ENCODE measurements at regions of chr20 and their contacts with region 1.

Region 1: GRCh38 chr20:32018269-32019074 is 8.2 kb downstream of the CCM2L start:
- DNase-seq: peak; percentile 98
- H3K4me3 ChIP-seq: peak overlapping the region; percentile 79
- H3K4me3 Mint-ChIP-seq: peak overlapping the region; percentile 93
- H3K27ac Mint-ChIP-seq: peak overlapping the region; percentile 85
- H3K4me1 ChIP-seq: peaks cover 12% of the 10 kb centered on the region
- H3K4me1 Mint-ChIP-seq: peaks cover 13% of the 10 kb centered on the region
- H3K27me3 ChIP-seq: peaks cover 13% of the 10 kb centered on the region
- H3K27me3 Mint-ChIP-seq: peaks cover 46% of the 10 kb centered on the region
- CTCF ChIP-seq: peak in 1 of 2 experiments; percentile 14

Region 2: GRCh38 chr20:31822421-31823330 is 195.8 kb before region 1 on chr20:
- CTCF ChIA-PET with region 1: interaction called, 15 read pairs
- POLR2A ChIA-PET with region 1: no interaction called
- intact Hi-C with region 1: loop called (anchors 2 kb)
- DNase-seq: peak; percentile 80 to 92
- H3K4me3 ChIP-seq: no peak overlapping the region
- H3K4me3 Mint-ChIP-seq: no peak overlapping the region
- H3K27ac Mint-ChIP-seq: no peak overlapping the region
- H3K4me1 ChIP-seq: no peaks in the 10 kb centered on the region
- H3K4me1 Mint-ChIP-seq: no peaks in the 10 kb centered on the region
- H3K27me3 ChIP-seq: no peaks in the 10 kb centered on the region
- H3K27me3 Mint-ChIP-seq: no peaks in the 10 kb centered on the region
- CTCF ChIP-seq: peak; percentile 100

Region 3: DNA sequence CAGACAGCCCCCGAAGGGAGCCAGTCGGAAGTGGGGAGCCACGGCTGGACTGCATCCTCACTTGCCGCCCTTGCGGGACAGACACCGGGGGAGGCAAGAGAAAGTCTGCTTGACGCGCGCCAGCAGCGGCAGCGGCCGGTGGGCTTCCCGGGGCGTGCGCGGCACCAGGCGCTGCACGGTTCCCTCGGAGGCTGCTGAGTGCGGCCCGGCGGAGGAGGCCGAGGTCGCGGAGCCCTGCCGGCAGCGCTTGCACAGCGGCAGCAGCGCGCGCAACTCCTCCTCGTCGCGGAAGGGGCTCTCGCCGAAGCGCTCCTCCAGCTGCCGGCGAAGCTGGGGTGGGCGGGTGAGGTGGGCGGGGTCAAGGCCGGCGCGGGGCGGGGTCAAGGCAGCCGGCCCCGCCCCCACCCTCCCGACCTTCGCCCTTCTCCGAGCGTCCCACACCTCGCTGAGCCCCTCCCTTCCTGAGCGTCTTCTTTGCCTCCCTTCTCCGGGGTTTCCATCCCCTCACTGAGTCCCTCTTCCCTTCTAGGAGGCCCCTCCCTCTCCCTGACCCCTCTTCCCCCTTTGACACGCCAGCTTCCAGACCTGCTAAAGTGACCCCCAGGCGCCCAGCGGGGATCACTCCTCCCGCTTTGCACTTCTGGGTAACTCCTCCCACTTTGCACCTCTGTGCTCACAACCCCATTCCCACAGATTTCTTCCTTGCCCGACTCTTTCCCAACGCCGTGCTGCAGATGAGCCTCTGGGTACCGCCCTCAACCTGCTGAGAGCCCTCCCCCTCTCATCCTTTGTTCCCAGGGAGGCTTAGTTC is 156.9 kb before region 1 on chr20:
- CTCF ChIA-PET with region 1: interaction called, 12 read pairs
- POLR2A ChIA-PET with region 1: no interaction called
- intact Hi-C with region 1: no loop called
- DNase-seq: peak; percentile 91
- H3K4me3 ChIP-seq: peak overlapping the region; percentile 75
- H3K4me3 Mint-ChIP-seq: peak overlapping the region; percentile 78
- H3K27ac Mint-ChIP-seq: peak overlapping the region; percentile 5
- H3K4me1 ChIP-seq: peaks cover 16% of the 10 kb centered on the region
- H3K4me1 Mint-ChIP-seq: peaks cover 8% of the 10 kb centered on the region
- H3K27me3 ChIP-seq: no peaks in the 10 kb centered on the region
- H3K27me3 Mint-ChIP-seq: peaks cover 7% of the 10 kb centered on the region
- CTCF ChIP-seq: no peak

Region 4: DNA sequence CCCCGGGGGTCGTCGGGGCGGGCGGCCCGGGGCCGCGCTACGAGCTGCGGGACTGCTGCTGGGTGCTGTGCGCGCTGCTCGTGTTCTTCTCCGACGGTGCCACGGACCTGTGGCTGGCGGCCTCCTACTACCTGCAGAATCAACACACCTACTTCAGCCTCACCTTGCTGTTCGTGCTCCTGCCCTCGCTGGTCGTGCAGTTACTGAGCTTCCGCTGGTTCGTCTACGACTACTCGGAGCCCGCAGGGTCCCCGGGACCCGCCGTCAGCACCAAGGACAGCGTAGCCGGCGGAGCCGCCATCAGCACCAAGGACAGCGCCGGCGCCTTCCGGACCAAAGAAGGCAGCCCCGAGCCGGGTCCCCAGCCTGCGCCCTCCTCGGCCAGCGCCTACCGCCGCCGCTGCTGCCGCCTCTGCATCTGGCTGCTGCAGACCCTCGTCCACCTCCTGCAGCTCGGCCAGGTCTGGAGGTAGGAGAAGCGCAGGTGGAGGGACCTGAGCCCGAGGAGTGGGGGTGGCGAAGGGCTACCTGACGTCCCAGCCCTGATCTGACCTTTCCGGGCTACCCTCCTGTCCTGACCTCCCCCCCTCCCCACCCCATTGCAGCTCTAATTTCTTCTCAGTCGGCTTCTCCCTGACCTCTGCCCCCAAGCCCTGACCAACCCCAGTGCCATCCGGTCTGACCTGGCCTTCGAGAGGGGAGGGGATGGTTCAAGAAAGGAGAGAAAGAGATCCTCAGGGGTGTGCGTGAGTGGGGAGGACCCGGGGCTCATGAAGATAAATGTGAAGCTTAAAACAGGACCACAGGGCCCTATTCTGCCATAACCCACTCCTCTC is 50.0 kb before region 1 on chr20:
- CTCF ChIA-PET with region 1: interaction called, 11 read pairs
- POLR2A ChIA-PET with region 1: no interaction called
- intact Hi-C with region 1: loop called (anchors 5 kb)
- DNase-seq: peak; percentile 88 to 97
- H3K4me3 ChIP-seq: no peak overlapping the region
- H3K4me3 Mint-ChIP-seq: peak overlapping the region; percentile 61
- H3K27ac Mint-ChIP-seq: no peak overlapping the region
- H3K4me1 ChIP-seq: 0 out of 2 replicates have a peak, but pooled peaks cover 11% of the 10 kb centered on the region
- H3K4me1 Mint-ChIP-seq: no peaks in the 10 kb centered on the region
- H3K27me3 ChIP-seq: peaks cover 2% of the 10 kb centered on the region
- H3K27me3 Mint-ChIP-seq: peaks cover 35% of the 10 kb centered on the region
- CTCF ChIP-seq: peak in 1 of 2 experiments; percentile 11

Region 5: GRCh38 chr20:32031007-32031958 is 12.8 kb after region 1 on chr20:
- CTCF ChIA-PET with region 1: interaction called, 92 read pairs
- POLR2A ChIA-PET with region 1: interaction called, 3 read pairs
- intact Hi-C with region 1: no loop called
- DNase-seq: peak; percentile 97 to 98
- H3K4me3 ChIP-seq: peak overlapping the region; percentile 31
- H3K4me3 Mint-ChIP-seq: peak overlapping the region; percentile 54
- H3K27ac Mint-ChIP-seq: no peak overlapping the region
- H3K4me1 ChIP-seq: peaks cover 6% of the 10 kb centered on the region
- H3K4me1 Mint-ChIP-seq: no peaks in the 10 kb centered on the region
- H3K27me3 ChIP-seq: peaks cover 7% of the 10 kb centered on the region
- H3K27me3 Mint-ChIP-seq: peaks cover 27% of the 10 kb centered on the region
- CTCF ChIP-seq: peak; percentile 24 to 100